Panc1 (cell line): ENCODE measurements at regions of chr2 and their contacts with region 1.

Region 1: DNA sequence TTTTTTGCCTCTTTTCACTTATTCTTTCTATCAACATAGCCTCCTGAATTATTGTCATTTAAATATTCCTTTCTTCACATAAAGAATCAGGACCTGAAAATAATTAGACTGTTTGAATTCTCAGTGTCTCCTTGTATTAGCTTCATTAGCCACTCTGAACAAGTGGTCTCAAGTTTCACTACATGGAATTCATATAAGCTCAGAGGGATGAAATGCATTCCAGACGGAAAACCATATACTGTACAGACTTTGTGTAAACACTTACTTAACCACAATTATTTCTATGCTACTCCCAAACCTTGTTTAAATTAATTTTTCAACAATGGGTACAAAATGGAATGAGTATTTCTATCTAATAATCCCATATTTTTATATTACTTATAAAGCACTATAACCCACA is 53.4 kb downstream of the CHN1 start:
- DNase-seq: no peak
- ATAC-seq: no peak
- H3K4me3 ChIP-seq: no peak overlapping the region
- H3K27ac ChIP-seq: no peak overlapping the region
- H3K4me1 ChIP-seq: no peaks in the 10 kb centered on the region
- H3K27me3 ChIP-seq: no peaks in the 10 kb centered on the region
- CTCF ChIP-seq: no peak

Region 2: GRCh38 chr2:174473796-174474195 is 477.9 kb before region 1 on chr2:
- CTCF ChIA-PET with region 1: no interaction called
- POLR2A ChIA-PET with region 1: no interaction called
- in situ Hi-C with region 1: no loop called
- intact Hi-C with region 1: no loop called
- DNase-seq: no peak
- ATAC-seq: no peak
- H3K4me3 ChIP-seq: no peak overlapping the region
- H3K27ac ChIP-seq: no peak overlapping the region
- H3K4me1 ChIP-seq: no peaks in the 10 kb centered on the region
- H3K27me3 ChIP-seq: no peaks in the 10 kb centered on the region
- CTCF ChIP-seq: no peak

Region 3: GRCh38 chr2:174615871-174616436 is 335.8 kb before region 1 on chr2:
- CTCF ChIA-PET with region 1: no interaction called
- POLR2A ChIA-PET with region 1: interaction called, 13 read pairs
- in situ Hi-C with region 1: no loop called
- intact Hi-C with region 1: no loop called
- DNase-seq: no peak
- ATAC-seq: no peak
- H3K4me3 ChIP-seq: no peak overlapping the region
- H3K27ac ChIP-seq: no peak overlapping the region
- H3K4me1 ChIP-seq: peaks cover 5% of the 10 kb centered on the region; the same call in 1 of the 2 replicates
- H3K27me3 ChIP-seq: no peaks in the 10 kb centered on the region
- CTCF ChIP-seq: no peak

Region 4: GRCh38 chr2:175103191-175103590 is 151.4 kb after region 1 on chr2:
- CTCF ChIA-PET with region 1: no interaction called
- POLR2A ChIA-PET with region 1: no interaction called
- in situ Hi-C with region 1: no loop called
- intact Hi-C with region 1: no loop called
- DNase-seq: no peak
- ATAC-seq: no peak
- H3K4me3 ChIP-seq: no peak overlapping the region
- H3K27ac ChIP-seq: no peak overlapping the region
- H3K4me1 ChIP-seq: no peaks in the 10 kb centered on the region
- H3K27me3 ChIP-seq: no peaks in the 10 kb centered on the region
- CTCF ChIP-seq: no peak